Activated CD8-positive, alpha-beta T cell treated with anti-CD3 and anti-CD28 coated beads for 36 hours (primary cell): ENCODE measurements at regions of chr3 and their contacts with region 1.

Region 1: DNA sequence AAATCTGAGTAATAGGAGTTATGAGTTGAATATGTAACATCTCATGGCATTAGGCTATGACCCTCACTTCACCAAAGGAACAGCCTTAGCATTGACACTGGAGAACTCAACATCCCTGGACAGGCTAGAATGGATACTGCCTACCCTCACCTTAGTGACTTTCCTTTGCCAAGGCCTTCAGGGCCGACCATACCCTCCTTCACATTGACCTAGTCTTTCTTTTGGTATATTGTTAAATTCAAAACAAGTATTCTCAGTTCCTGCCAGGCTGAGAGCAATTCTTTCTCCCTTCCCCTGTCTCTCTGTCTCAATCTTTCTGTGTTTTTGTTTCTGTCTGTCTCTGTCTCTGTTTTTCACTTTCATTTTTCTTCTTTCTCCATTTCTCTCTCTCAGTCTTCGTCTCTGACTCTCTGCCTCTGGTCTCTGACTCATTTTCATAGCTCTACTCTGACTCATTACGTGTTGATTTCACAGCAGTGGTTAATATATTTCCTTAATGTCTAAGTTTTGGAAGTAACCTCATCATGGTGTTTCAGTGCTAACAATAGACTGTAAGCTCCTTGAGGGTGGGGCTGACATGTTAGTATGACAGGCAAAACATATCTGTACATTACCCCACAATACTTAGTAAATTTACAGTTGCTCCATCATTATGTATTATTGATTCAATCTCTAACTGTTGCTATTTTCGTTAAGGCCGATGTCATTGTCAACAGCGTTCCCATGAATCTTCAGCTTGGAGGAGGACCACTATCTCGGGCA is 32.5 kb downstream of the PARP15 start:
- DNase-seq: peak; percentile 38
- ATAC-seq: peak; percentile 92
- H3K4me3 Mint-ChIP-seq: peak overlapping the region; percentile 45
- H3K27ac Mint-ChIP-seq: peak overlapping the region; percentile 92
- H3K4me1 Mint-ChIP-seq: peaks cover 28% of the 10 kb centered on the region
- H3K27me3 Mint-ChIP-seq: no peaks in the 10 kb centered on the region
- CTCF ChIP-seq: no peak

Region 2: DNA sequence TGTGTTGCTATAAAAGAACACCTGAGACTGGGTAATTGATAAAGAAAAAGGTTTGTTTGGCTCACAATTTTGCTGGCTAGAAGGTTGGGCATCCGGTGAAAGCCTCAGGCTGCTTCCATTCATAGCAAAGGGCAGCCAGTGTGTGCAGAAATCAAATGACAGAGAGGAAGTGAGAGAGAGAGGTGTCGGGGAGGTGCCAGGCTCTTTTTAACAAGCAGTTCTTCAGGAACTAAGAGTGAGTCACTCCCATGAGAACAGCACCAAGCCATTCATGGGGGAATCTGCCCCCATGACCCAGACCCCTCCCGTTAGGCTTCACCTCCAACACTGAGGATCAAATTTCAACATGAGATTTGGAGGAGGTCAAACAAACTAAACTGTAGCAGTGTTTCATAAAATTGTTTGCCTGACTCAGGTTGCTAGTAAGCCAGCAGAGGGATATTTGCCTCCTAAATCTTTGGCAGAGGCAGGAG is 37.0 kb before region 1 on chr3:
- CTCF ChIA-PET with region 1: no interaction called
- POLR2A ChIA-PET with region 1: interaction called, 6 read pairs
- intact Hi-C with region 1: loop called (anchors 5 kb)
- DNase-seq: peak; percentile 58
- ATAC-seq: peak; percentile 49
- H3K4me3 Mint-ChIP-seq: no peak overlapping the region
- H3K27ac Mint-ChIP-seq: peak overlapping the region; percentile 77
- H3K4me1 Mint-ChIP-seq: peaks cover 66% of the 10 kb centered on the region
- H3K27me3 Mint-ChIP-seq: no peaks in the 10 kb centered on the region
- CTCF ChIP-seq: no peak

Region 3: GRCh38 chr3:122745346-122746021 is 135.5 kb after region 1 on chr3:
- CTCF ChIA-PET with region 1: no interaction called
- POLR2A ChIA-PET with region 1: no interaction called
- intact Hi-C with region 1: no loop called
- DNase-seq: no peak
- ATAC-seq: no peak
- H3K4me3 Mint-ChIP-seq: no peak overlapping the region
- H3K27ac Mint-ChIP-seq: no peak overlapping the region
- H3K4me1 Mint-ChIP-seq: no peaks in the 10 kb centered on the region
- H3K27me3 Mint-ChIP-seq: no peaks in the 10 kb centered on the region
- CTCF ChIP-seq: no peak